K562 (cell line): ENCODE measurements at regions of chr4 and their contacts with region 1.

Region 1: DNA sequence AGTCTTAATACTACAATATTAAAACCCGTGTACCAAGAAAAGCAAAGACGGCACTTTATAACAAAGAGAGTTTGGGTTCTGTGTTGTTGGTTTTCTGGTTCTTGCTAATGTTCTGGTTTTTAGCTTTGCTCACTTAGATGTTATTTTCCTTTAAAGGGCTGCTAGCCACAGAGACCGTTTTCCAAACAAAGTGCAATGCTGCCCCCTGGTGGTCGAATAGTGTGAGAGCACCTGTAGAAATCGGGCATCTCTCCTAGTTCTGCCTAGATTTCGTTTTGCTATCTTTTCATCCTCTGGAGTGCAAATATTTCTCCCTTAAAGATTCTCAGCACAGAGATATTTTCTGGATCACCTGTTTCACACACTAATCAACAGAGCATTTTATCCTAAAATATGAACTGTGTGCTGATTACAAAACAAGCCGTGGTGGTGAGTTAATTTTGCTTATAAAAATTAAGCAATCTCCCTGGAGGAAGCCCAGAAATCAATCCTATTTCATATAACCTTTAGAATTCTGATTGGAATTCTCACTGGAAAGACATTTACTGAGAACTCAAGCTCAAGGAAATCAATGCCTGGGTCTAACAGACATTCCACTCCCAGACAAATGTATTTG is 334.5 kb upstream of the NOCT start:
- DNase-seq: peak; percentile 61 to 85 (median 68)
- ATAC-seq: peak; percentile 90
- H3K4me3 ChIP-seq: no peak overlapping the region
- H3K27ac ChIP-seq: no peak overlapping the region
- H3K4me1 ChIP-seq: peaks cover 0 to 3% of the 10 kb centered on the region in 2 experiments; a peak in 2 of 5 replicates
- H3K27me3 ChIP-seq: peaks cover 6 to 11% of the 10 kb centered on the region in 2 experiments
- CTCF ChIP-seq: peak; percentile 77 to 92 (median 79)
- EP300 ChIP-seq: no peak
- POLR2A ChIP-seq: no peak
- RAD21 ChIP-seq: peak; percentile 91 to 93

Region 2: GRCh38 chr4:137735561-137736104 is 945.5 kb before region 1 on chr4:
- CTCF ChIA-PET with region 1: no interaction called
- POLR2A ChIA-PET with region 1: no interaction called
- in situ Hi-C with region 1: loop called (anchors 10 kb)
- intact Hi-C with region 1: loop called (anchors 1 kb)
- DNase-seq: no peak
- ATAC-seq: peak; percentile 27; the same call in 1 of the 3 replicates
- H3K4me3 ChIP-seq: no peak overlapping the region
- H3K27ac ChIP-seq: no peak overlapping the region
- H3K4me1 ChIP-seq: peaks cover 0 to 6% of the 10 kb centered on the region in 2 experiments; a peak in 1 of 5 replicates
- H3K27me3 ChIP-seq: no peaks in the 10 kb centered on the region
- CTCF ChIP-seq: no peak
- EP300 ChIP-seq: no peak
- POLR2A ChIP-seq: no peak
- RAD21 ChIP-seq: no peak

Region 3: DNA sequence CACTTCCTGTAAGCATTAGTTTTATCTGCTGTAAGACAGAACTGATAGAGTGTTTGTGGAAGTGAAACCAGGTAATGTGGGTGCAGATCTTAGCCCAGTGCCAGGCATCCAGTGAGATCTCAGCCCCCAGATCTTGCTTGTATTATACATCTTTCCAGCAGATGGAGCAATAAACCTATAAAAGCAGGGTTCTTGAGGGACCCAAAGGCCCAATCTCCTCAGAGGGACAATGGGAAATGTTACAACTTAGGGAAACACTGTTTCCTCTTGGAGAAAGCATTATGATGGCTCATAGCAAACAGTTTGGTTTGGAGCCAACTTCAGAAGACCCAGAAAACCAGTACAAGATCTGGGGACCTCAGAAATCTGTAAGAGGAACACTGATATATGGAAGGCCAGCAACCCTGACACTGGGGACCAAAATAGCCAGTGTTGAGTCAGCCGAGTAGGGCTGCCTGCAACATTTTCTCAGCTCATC is 645.3 kb before region 1 on chr4:
- CTCF ChIA-PET with region 1: interaction called, 11 read pairs
- POLR2A ChIA-PET with region 1: no interaction called
- in situ Hi-C with region 1: loop called (anchors 5 kb)
- intact Hi-C with region 1: loop called (anchors 1 kb)
- DNase-seq: peak; percentile 22 to 62 (median 36)
- ATAC-seq: peak; percentile 97
- H3K4me3 ChIP-seq: no peak overlapping the region
- H3K27ac ChIP-seq: no peak overlapping the region
- H3K4me1 ChIP-seq: no peaks in the 10 kb centered on the region
- H3K27me3 ChIP-seq: no peaks in the 10 kb centered on the region
- CTCF ChIP-seq: peak; percentile 49 to 74 (median 60); a peak in 5 of 6 replicates
- EP300 ChIP-seq: no peak
- POLR2A ChIP-seq: no peak
- RAD21 ChIP-seq: peak; percentile 75 to 80

Region 4: DNA sequence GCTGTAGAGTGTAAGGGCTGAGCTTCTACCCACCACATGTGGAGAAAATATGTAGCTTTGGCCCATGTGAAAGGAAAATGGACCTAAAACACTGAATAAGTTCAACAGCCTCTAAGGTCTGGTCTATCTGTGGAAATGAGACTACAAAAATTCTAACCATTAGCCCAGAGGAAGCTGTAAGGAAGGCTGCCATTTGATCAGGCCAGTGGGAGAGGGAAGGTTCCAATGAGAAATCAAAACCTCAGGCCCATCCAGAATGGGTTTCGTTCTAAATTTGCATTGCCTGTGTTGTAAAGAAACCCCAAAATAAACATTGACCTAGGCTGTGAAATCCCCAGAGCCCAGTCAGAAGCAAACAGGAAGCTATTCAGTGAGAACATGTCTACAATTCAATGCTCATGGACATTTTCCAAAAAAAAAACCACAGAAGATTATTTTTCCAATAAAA is 118.5 kb before region 1 on chr4:
- CTCF ChIA-PET with region 1: interaction called, 4 read pairs
- POLR2A ChIA-PET with region 1: interaction called, 3 read pairs
- in situ Hi-C with region 1: no loop called
- intact Hi-C with region 1: loop called (anchors 1 kb)
- DNase-seq: no peak
- ATAC-seq: no peak
- H3K4me3 ChIP-seq: no peak overlapping the region
- H3K27ac ChIP-seq: no peak overlapping the region
- H3K4me1 ChIP-seq: peaks cover 0 to 3% of the 10 kb centered on the region in 2 experiments; a peak in 3 of 5 replicates
- H3K27me3 ChIP-seq: no peaks in the 10 kb centered on the region
- CTCF ChIP-seq: no peak
- EP300 ChIP-seq: no peak
- POLR2A ChIP-seq: no peak
- RAD21 ChIP-seq: no peak

Region 5: DNA sequence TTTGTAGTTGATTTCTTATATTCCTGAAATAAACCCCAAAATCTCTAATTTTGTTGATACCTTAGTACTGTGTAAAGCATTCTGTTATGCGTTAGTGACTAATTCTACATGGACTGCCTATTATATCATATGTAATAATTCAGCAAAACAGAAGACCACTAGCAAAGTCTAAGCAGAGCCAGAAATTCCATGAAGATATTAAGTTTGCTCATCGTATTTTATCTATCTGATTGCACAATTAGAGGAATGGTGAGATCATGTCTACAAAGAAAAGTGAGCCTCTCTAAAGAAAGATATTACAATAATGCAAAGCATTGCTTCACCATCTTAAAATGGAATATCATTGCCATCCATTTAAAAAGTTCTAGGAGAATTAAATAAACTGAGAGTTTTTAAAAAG is 64.3 kb before region 1 on chr4:
- CTCF ChIA-PET with region 1: no interaction called
- POLR2A ChIA-PET with region 1: no interaction called
- in situ Hi-C with region 1: no loop called
- intact Hi-C with region 1: no loop called
- DNase-seq: no peak
- ATAC-seq: no peak
- H3K4me3 ChIP-seq: no peak overlapping the region
- H3K27ac ChIP-seq: no peak overlapping the region
- H3K4me1 ChIP-seq: no peaks in the 10 kb centered on the region
- H3K27me3 ChIP-seq: no peaks in the 10 kb centered on the region
- CTCF ChIP-seq: no peak
- EP300 ChIP-seq: no peak
- POLR2A ChIP-seq: no peak
- RAD21 ChIP-seq: no peak

Region 6: DNA sequence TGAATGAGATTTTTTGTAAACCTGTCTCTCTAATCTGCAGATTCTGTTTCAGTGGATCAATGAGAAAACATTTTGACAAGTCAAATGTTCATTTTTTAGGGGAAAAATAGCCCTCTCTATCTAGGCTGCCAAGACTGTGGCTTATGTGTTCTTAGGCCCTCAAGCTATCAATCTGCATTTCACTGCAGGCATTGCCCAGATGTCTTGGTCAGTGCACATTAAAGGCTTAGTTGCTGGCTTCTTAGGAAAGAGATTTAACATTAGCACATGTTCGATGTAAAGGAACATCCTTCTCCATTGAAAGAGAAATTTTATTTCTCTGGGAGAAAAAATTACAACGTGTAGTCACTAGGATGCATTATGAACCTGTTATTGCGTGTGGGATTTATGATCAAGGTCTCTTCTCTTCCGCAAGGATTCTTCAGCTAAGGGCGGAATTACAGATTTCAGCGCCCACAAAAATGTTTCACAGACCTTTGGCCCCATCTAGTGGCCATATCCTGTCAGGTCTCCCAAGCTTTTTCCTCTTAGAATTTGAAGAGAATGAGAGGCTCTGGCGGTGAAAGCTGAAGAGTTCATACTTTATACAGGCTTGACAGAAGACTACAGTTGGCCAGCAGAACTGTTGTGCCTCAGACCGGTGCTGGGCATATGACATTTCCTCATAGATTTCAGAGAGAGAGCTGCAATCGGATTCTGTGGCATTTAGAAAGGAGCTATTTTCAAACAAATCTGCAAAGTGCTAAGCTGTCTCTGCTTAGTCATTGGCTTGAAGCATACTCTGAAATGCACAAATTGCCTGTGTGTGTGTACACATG is 189.8 kb after region 1 on chr4:
- CTCF ChIA-PET with region 1: no interaction called
- POLR2A ChIA-PET with region 1: no interaction called
- in situ Hi-C with region 1: loop called (anchors 10 kb)
- intact Hi-C with region 1: loop called (anchors 1 kb)
- DNase-seq: peak; percentile 58 to 78 (median 60)
- ATAC-seq: peak; percentile 86
- H3K4me3 ChIP-seq: no peak overlapping the region
- H3K27ac ChIP-seq: no peak overlapping the region
- H3K4me1 ChIP-seq: no peaks in the 10 kb centered on the region; a peak in 1 of 5 replicates
- H3K27me3 ChIP-seq: peaks cover 12 to 29% of the 10 kb centered on the region in 2 experiments
- CTCF ChIP-seq: peak; percentile 76 to 89 (median 80)
- EP300 ChIP-seq: no peak
- POLR2A ChIP-seq: no peak
- RAD21 ChIP-seq: peak; percentile 86 to 87

Region 7: GRCh38 chr4:138891606-138892005 is 210.5 kb after region 1 on chr4:
- CTCF ChIA-PET with region 1: no interaction called
- POLR2A ChIA-PET with region 1: no interaction called
- in situ Hi-C with region 1: no loop called
- intact Hi-C with region 1: no loop called
- DNase-seq: no peak
- ATAC-seq: no peak; the same call in 2 of the 3 replicates
- H3K4me3 ChIP-seq: no peak overlapping the region
- H3K27ac ChIP-seq: no peak overlapping the region
- H3K4me1 ChIP-seq: peaks cover 0 to 2% of the 10 kb centered on the region in 2 experiments; a peak in 2 of 5 replicates
- H3K27me3 ChIP-seq: no peaks in the 10 kb centered on the region
- CTCF ChIP-seq: no peak
- EP300 ChIP-seq: no peak
- POLR2A ChIP-seq: no peak
- RAD21 ChIP-seq: no peak

Region 8: GRCh38 chr4:138938366-138938690 is 257.2 kb after region 1 on chr4:
- CTCF ChIA-PET with region 1: no interaction called
- POLR2A ChIA-PET with region 1: no interaction called
- in situ Hi-C with region 1: no loop called
- intact Hi-C with region 1: loop called (anchors 5 kb)
- DNase-seq: peak in 2 of 4 experiments; percentile 31 to 61
- ATAC-seq: peak; percentile 96
- H3K4me3 ChIP-seq: no peak overlapping the region
- H3K27ac ChIP-seq: no peak overlapping the region
- H3K4me1 ChIP-seq: no peaks in the 10 kb centered on the region
- H3K27me3 ChIP-seq: no peaks in the 10 kb centered on the region
- CTCF ChIP-seq: peak; percentile 49 to 72 (median 55); a peak in 4 of 6 replicates
- EP300 ChIP-seq: no peak
- POLR2A ChIP-seq: no peak
- RAD21 ChIP-seq: peak; percentile 60 to 72